Cardiac septum (tissue), 1 donor: ENCODE measurements at regions of chr2 and their contacts with region 1.

Region 1: DNA sequence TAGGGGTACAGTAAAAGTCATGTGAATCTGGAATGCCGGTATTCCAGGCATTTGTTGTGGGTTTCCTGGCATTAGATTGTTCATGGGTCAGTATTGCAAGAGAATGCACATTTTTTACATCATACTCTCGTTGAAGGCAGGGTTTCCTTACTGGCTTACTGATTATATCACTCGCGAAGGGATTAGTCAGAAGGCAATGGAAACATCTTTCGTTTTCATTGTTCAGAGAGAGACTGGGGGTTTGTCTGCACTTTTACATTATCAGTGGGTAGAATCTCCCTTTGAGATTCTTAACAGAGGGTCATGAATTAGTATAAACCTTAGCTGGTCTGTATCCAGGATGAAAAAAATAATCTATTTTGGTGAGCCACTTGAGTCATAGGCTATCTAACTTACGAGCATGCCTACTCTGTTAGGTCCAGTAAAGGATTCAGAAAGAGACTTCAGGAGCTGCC is 229.3 kb upstream of the EPAS1 start:
- DNase-seq: no peak

Region 2: GRCh38 chr2:46229134-46230063 is 161.5 kb after region 1 on chr2:
- intact Hi-C with region 1: no loop called
- DNase-seq: no peak

Region 3: GRCh38 chr2:46269544-46270273 is 201.8 kb after region 1 on chr2:
- intact Hi-C with region 1: loop called (anchors 5 kb)
- DNase-seq: no peak